Aorta (tissue), 5 donors: ENCODE measurements at regions of chr19 and their contacts with region 1.

Region 1: DNA sequence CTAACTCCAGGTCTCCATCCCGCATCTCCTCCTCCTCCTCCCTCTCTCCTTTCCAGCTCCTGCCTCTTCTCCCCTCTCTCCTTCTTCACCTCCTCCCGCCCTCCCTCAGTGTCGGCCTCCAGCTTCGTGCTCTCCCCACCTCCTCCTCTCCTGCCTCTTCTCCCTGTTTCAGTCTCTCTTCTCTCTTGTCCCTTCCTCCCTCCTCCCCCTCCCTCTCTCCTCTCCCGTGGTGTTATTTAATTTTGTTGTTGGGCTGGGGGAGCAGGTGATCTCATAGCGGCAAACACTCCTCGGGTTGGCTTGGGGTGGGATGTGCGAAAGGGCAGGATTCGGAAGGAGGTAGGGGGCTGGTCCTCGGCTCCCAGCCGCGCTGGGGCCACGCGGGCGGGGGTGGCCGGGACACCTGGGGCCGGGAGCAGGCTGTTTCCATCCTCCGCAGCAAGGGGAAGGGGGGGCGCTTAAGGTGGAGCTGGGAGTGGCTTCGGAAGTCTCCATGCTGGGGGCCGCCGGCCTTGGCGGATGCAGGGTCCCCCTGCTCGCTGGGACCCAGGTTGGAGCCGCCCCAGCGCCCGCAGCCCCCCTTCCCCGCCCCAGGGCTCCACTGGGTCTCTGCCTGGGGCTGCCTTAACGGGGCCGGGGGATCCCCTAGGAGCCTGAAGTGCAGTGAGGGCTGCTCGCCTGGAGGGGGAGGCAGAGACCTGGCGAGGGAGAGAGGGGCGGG is at the start of gene CA11:
- DNase-seq: peak; percentile 92 to 95
- ATAC-seq: peak; percentile 95
- H3K4me3 ChIP-seq: peak within 1 kb of the TSS; percentile 7 to 8
- H3K27ac ChIP-seq: peak within 1 kb of the TSS; percentile 1 to 18
- H3K4me1 ChIP-seq: peaks cover 0 to 3% of the 10 kb centered on the region in 2 donors
- H3K27me3 ChIP-seq: no peaks in the 10 kb centered on the region
- total RNA-seq, gene CA11: 6.4 to 12.0 TPM

Region 2: DNA sequence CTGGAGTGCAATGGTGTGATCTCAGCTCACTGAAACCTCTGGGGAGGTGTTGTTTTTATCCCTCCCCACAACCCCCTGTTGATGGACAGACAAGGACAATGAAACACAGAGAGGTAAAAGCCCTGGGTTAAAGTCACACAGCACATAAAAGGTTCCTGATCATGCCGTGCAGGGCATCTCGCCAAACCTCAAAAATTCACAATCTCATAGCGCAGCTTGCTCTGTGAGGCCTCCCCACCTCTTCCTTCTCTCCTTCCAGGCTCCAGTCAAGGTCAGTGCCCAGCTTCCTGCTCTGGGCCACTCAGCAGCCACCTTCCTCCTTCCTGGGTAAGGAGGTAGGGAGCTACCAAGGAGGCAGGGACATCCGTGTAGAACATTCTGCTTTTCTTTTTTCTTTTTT is 51.9 kb after region 1 on chr19:
- intact Hi-C with region 1: no loop called
- DNase-seq: no peak
- ATAC-seq: no peak
- H3K4me3 ChIP-seq: no peak overlapping the region
- H3K27ac ChIP-seq: no peak overlapping the region
- H3K4me1 ChIP-seq: no peaks in the 10 kb centered on the region
- H3K27me3 ChIP-seq: no peaks in the 10 kb centered on the region

Region 3: DNA sequence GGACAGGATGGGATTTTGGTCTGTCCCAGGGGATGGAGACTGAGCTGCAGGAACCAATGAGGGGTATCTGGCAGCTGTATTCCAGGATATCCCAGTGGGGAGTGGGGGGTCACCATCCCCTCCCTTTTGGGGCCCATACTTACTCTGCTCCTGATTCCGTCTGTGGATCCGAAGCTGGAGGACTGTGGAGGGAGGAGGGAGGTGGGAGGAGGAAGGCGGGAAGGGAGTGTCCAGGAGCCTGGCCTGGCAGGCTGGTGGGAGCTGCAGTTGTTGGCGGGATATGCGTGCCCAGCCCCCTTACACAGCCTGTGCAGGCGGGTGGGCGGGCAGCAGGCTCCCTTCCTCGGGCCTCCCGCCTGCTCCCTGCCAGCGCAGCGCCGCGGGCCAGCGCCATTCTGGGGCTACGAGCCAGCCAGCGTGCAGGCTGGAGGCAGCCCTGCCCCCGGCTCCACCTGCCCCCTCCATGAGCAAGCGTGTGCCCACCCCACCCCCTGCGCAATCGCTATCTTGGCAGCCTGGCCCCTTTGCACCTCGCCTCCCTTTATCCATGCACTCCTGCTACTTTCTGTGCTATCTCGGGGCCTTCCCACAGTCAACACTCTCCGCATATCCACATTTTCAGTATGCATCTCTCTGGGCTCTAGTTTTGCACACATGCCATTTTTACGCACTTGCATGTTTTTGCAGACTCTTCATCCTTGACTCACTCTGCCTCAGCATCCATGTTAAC is 70.6 kb after region 1 on chr19:
- intact Hi-C with region 1: loop called in 1 of 2 experiments (anchors 5 kb)
- DNase-seq: peak in 1 of 2 donors; percentile 77
- ATAC-seq: peak; percentile 6
- H3K4me3 ChIP-seq: no peak overlapping the region
- H3K27ac ChIP-seq: no peak overlapping the region
- H3K4me1 ChIP-seq: no peaks in the 10 kb centered on the region
- H3K27me3 ChIP-seq: no peaks in the 10 kb centered on the region

Region 4: DNA sequence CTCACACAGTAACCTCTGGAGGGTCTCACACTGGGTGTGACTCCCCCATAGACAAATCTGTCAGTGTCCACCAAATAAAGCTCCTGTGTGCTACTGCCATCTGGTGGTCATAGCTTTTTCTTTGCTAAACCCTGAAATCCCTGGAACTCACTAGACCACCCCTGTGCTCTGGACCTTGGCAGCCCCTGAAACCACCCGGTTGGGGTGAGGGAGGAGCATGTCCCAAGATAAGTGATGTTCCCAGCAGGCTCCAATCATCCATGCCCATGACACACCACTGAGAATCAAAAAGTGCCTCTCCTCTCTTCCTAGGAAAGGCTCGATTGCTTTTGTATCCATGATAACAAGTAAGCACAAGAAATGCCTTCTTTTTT is 196.6 kb after region 1 on chr19:
- intact Hi-C with region 1: loop called in 1 of 2 experiments (anchors 10 kb)
- DNase-seq: no peak
- ATAC-seq: peak; percentile 84
- H3K4me3 ChIP-seq: no peak overlapping the region
- H3K27ac ChIP-seq: no peak overlapping the region
- H3K4me1 ChIP-seq: no peaks in the 10 kb centered on the region
- H3K27me3 ChIP-seq: no peaks in the 10 kb centered on the region